Activated CD8-positive, alpha-beta T cell treated with anti-CD3 and anti-CD28 coated beads for 36 hours (primary cell): ENCODE measurements at regions of chr16 and their contacts with region 1.

Region 1: DNA sequence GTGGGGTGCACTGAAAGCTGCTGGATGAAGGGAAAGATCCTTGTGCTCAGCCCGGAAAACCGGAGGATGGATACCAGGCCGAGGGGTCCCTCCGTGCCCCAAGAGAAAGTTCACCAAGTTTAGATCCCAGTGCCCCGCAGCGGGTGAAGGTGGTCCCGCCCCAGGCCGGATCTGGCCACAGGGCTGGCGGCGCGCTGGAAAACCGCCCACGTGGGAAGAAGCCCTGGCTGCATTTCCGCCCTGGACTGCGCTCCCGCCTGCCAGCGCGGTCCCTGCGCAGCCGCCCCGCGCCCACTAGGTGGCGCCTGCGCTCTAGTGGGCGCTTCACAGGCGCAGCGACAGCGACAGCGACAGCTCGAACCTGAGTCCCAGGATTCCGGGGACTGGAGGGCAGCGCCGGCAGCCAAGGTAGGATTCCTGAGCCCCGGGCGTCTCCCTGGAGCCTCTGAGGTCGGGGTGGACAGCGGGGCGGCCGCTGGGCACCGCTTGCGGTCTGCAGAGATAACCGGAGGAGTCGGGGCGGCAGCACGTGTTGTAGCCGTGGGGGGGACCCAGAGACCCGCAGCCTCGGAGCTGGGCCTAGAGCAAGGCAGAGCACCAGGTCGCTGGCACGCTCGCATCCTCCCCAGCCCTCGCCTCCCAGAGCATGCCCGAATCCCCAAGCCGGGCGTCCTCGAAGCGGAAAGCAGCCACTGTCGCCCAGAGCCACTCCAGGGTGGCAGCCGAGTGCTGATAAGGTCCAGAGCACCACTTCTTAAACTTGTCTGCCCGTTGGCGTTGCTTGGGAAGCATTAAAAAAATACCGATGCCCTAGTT is at the start of gene CHD9:
- DNase-seq: peak; percentile 74
- ATAC-seq: peak; percentile 91
- H3K4me3 Mint-ChIP-seq: peak within 1 kb of the TSS; percentile 82
- H3K27ac Mint-ChIP-seq: peak within 1 kb of the TSS; percentile 87
- H3K4me1 Mint-ChIP-seq: peaks cover 26% of the 10 kb centered on the region
- H3K27me3 Mint-ChIP-seq: peaks cover 3% of the 10 kb centered on the region
- CTCF ChIP-seq: peak; percentile 99
- total RNA-seq, gene CHD9: 13.8 to 16.3 TPM

Region 2: DNA sequence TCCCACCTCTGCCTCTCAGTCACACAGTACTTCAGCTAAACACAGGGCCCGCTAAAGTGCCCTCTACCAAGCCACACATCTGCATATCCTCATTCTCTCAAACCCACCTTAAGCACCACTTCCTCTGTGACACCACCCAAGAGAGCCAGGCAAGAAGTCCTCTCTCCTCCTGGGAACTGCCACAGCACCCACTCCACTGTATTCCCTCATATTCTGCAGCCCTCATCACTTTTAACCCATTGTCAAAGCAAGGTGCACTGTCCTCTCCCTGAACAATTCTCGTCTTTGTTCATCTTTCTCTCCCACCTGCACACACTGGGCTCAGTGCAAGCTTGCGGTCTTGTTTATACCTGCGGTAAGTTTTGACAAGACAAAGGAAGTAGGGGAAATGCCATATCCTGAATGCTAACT is 13.6 kb after region 1 on chr16:
- CTCF ChIA-PET with region 1: interaction called, 11 read pairs
- POLR2A ChIA-PET with region 1: interaction called, 4 read pairs
- intact Hi-C with region 1: no loop called
- DNase-seq: peak; percentile 43
- ATAC-seq: peak; percentile 82
- H3K4me3 Mint-ChIP-seq: peak overlapping the region; percentile 2
- H3K27ac Mint-ChIP-seq: peak overlapping the region; percentile 19
- H3K4me1 Mint-ChIP-seq: peaks cover 59% of the 10 kb centered on the region
- H3K27me3 Mint-ChIP-seq: no peaks in the 10 kb centered on the region
- CTCF ChIP-seq: no peak

Region 3: DNA sequence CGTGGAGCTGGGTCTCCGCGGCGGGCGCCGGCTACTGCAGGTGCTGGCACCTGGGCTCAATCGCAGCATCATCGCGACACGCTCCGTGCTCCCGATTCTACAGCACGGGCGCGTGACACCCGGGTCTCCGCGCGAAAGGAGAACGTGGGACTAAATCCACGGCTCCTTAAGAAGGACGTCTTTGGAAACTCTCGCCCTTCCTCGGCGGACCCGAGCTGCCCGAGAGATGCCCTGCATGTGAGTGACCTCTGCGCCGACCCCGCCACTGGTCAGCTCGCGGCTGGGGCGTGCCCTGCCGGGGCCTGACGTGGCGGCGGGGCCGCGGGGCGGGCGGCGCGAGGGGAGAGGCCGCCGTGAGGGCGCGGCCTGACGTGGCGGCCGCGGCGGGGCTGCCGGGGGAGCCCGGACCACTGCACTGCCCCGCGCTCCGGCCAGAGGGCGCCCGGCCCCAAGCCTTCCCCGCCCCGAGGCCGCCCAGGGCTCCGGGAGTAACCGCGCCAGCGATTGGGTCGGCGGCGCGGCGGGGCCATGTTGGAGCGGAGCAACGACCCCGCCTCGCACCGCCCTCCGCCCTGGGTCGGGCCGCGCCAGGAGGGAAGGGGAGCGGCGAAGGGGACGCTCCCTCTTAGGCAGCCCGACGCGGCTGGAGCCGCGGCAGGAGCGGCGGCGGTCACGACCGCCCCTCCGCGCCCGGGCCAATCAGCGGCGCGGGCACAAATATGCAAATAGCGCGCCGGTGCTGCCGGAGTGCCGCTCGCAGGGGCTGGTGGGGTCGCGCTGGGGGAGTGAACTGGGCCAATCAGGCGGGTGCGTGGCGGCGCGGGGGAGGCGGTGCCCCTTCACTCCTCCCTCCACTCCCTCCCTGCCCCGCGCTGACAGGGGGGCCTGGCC is 75.5 kb after region 1 on chr16:
- CTCF ChIA-PET with region 1: interaction called, 19 read pairs
- POLR2A ChIA-PET with region 1: no interaction called
- intact Hi-C with region 1: loop called (anchors 5 kb)
- DNase-seq: peak; percentile 94
- ATAC-seq: peak; percentile 90
- H3K4me3 Mint-ChIP-seq: peak overlapping the region; percentile 70
- H3K27ac Mint-ChIP-seq: peak overlapping the region; percentile 67
- H3K4me1 Mint-ChIP-seq: peaks cover 22% of the 10 kb centered on the region
- H3K27me3 Mint-ChIP-seq: no peaks in the 10 kb centered on the region
- CTCF ChIP-seq: peak; percentile 28

Region 4: GRCh38 chr16:53159781-53160436 is 105.0 kb after region 1 on chr16:
- CTCF ChIA-PET with region 1: interaction called, 35 read pairs
- POLR2A ChIA-PET with region 1: no interaction called
- intact Hi-C with region 1: loop called (anchors 5 kb)
- DNase-seq: peak; percentile 26
- ATAC-seq: peak; percentile 66
- H3K4me3 Mint-ChIP-seq: no peak overlapping the region
- H3K27ac Mint-ChIP-seq: no peak overlapping the region
- H3K4me1 Mint-ChIP-seq: peaks cover 6% of the 10 kb centered on the region
- H3K27me3 Mint-ChIP-seq: no peaks in the 10 kb centered on the region
- CTCF ChIP-seq: peak; percentile 72

Region 5: DNA sequence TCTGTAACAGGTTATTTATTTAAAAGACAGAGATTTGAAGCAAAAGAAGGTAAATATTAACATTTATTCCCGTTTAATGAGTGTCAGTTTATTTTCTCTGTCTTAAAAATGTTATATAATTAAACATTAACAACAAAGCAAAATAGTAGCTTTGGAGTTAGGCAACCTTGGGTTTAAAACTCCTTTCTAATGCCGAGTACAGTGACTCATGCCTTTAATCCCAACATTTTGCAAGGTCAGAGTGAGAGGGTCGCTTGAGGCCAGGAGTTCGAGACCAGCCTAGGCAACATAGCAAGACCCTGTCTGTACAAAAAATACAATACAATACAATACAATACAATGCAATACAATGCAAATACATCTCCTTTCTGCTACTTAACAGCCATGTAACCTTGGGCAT is 128.6 kb after region 1 on chr16:
- CTCF ChIA-PET with region 1: interaction called, 12 read pairs
- POLR2A ChIA-PET with region 1: no interaction called
- intact Hi-C with region 1: no loop called
- DNase-seq: no peak
- ATAC-seq: no peak
- H3K4me3 Mint-ChIP-seq: no peak overlapping the region
- H3K27ac Mint-ChIP-seq: no peak overlapping the region
- H3K4me1 Mint-ChIP-seq: no peaks in the 10 kb centered on the region
- H3K27me3 Mint-ChIP-seq: no peaks in the 10 kb centered on the region
- CTCF ChIP-seq: no peak

Region 6: DNA sequence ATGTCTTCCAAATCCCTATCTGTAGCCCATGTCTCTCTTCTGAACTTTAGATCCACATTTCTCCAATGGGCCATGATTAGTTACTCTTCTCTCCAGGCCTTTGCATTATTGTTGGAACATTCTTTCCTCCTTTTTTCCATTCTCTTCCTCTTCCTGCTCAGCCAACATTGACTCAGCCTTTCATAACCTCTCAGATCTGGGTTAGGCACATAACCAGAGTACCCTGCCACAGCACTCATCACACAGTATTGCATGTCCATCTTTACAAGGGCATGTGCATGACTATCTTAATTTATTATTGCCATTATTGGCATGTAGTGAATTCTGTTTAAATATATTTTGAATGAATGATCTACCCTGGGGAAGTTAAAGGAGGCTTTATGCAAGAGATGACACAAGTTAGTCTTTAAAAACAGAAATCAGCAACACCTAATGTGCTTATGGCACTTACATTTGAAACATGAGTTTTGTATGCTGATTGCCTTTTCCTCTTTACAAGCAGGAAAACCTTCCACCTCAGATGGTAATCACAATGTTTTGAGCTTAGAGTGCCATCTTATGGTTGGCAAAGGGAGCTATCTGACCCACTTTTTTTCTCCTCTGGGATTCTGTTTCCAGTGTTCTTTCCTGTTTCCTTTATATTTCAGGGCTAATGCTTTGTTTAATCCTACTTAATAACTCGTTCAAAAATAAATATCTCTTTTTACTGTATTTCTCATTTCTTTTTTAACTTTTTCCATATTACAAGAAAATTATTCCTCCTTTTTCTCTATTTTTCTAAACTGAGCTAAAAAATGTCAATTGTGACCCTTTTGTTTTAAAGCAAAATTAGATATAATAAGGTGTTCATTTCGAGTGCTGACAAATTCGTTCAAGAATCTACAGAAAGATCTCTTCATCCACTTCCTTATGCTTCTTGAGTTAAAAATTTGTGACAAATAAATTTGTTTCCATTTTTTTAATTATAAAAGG is 228.4 kb after region 1 on chr16:
- CTCF ChIA-PET with region 1: interaction called, 5 read pairs
- POLR2A ChIA-PET with region 1: no interaction called
- intact Hi-C with region 1: loop called (anchors 10 kb)
- DNase-seq: no peak
- ATAC-seq: no peak
- H3K4me3 Mint-ChIP-seq: no peak overlapping the region
- H3K27ac Mint-ChIP-seq: no peak overlapping the region
- H3K4me1 Mint-ChIP-seq: no peaks in the 10 kb centered on the region
- H3K27me3 Mint-ChIP-seq: no peaks in the 10 kb centered on the region
- CTCF ChIP-seq: peak; percentile 57